HEK293T (cell line): ENCODE measurements at regions of chr10 and their contacts with region 1.

Region 1: GRCh38 chr10:30591249-30591670 is 38.3 kb downstream of the LYZL2 start:
- DNase-seq: peak; percentile 50

Region 2: DNA sequence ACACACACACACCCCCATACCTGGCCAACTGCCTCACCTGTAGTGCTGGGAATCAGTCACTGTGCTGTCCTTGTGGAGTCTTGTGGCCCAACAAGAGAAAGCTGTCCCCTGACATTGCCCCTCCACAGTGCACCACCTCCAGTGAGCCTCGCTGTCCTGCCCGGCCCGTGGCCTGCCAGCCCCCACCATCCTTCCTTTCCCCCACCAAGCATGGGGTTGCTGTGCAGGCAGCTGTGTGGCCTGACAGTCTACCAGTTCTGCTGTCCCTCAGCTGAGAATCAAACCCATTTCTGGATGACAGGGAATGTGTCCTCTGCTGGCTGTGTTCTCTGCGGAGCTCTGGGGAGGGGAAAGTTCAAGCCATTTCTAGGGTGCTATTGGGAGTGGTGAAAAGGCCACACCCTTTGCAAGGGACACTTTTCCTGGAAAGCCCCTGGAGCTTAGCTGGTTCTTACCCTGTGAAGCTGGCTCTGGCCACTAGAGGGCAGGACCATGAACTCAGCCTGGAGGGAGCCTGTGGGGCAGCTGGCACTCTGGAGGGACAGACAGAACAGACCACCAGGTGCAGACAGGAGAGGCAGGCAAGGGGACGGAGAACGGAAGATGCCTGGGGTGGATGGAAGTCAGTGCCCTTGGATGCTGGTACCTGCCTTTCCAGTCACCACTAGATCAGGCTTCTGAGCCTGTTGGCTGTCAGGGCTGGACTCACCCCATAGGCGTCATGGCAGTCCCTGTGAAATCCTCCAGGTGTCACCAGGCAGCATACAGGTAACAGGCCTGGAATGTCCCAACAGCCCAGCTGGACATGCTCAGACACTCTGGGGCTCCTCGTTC is 231.7 kb before region 1 on chr10:
- CTCF ChIA-PET with region 1: interaction called, 10 read pairs
- POLR2A ChIA-PET with region 1: no interaction called
- DNase-seq: peak; percentile 42

Region 3: DNA sequence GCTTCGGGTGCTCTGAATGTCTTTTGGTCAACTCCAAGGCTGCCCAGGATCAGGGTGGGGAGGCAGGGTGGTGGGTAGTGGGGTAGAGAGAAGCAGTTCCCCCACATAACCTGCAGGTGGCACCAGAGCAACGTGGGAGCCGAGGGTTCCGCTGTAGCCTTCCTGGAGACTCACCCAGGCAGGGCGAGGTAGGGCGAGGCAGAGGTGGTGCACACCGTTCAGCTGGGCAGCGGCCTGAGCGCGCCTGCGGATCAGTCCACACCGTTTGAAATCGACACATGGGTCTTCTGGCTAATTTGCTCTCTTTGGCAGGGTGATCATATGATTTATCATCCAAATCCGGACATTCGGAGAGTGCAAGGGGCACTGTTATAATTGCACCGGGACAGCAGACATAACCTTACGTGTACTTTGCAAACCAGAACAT is 198.7 kb before region 1 on chr10:
- CTCF ChIA-PET with region 1: interaction called, 24 read pairs
- POLR2A ChIA-PET with region 1: no interaction called
- DNase-seq: peak; percentile 74

Region 4: DNA sequence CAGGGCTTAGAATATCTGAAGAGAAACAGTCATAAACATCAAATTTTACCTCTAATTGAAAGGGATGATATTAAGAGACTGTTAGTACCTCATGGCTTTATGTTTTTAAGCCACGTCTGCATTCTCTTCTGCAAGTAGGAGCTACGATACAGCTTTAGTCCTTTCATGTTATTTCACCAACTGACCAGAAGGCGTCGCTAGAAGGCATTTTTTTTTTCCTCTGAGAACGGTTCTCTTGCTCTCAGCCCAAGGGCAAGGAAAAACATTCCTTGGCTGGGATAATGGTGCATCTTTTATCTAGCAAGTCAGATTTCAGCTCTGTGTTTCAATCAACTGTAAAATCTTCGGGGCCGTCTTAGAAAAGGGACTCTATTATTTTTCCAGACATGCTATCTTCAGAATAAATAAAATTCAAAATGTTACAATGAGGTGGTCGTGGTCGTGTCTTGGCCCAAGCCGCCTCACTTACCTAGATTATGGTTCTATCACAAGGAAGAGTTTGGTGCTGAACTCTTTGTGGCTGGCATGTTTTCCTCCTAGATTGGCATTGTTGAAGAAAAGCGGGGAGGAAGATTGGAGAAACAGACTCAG is 79.9 kb after region 1 on chr10:
- CTCF ChIA-PET with region 1: no interaction called
- POLR2A ChIA-PET with region 1: no interaction called
- DNase-seq: peak; percentile 44